Astrocyte of the cerebellum (primary cell): ENCODE measurements at regions of chr3 and their contacts with region 1.

Region 1: GRCh38 chr3:156181323-156181908 is 61.0 kb downstream of the KCNAB1 start:
- DNase-seq: no peak
- H3K4me3 ChIP-seq: no peak overlapping the region
- CTCF ChIP-seq: no peak

Region 2: GRCh38 chr3:156120528-156121251 is 60.7 kb before region 1 on chr3 and contains the start of gene KCNAB1:
- in situ Hi-C with region 1: no loop called
- DNase-seq: no peak
- H3K4me3 ChIP-seq: no peak within 1 kb of the TSS
- CTCF ChIP-seq: no peak

Region 3: GRCh38 chr3:156509189-156510174 is 328.1 kb after region 1 on chr3:
- in situ Hi-C with region 1: loop called (anchors 25 kb)
- DNase-seq: peak; percentile 63
- H3K4me3 ChIP-seq: no peak overlapping the region
- CTCF ChIP-seq: peak; percentile 15